ENCODE measurements at regions of chr3 and their contacts with region 1.

Region 1: DNA sequence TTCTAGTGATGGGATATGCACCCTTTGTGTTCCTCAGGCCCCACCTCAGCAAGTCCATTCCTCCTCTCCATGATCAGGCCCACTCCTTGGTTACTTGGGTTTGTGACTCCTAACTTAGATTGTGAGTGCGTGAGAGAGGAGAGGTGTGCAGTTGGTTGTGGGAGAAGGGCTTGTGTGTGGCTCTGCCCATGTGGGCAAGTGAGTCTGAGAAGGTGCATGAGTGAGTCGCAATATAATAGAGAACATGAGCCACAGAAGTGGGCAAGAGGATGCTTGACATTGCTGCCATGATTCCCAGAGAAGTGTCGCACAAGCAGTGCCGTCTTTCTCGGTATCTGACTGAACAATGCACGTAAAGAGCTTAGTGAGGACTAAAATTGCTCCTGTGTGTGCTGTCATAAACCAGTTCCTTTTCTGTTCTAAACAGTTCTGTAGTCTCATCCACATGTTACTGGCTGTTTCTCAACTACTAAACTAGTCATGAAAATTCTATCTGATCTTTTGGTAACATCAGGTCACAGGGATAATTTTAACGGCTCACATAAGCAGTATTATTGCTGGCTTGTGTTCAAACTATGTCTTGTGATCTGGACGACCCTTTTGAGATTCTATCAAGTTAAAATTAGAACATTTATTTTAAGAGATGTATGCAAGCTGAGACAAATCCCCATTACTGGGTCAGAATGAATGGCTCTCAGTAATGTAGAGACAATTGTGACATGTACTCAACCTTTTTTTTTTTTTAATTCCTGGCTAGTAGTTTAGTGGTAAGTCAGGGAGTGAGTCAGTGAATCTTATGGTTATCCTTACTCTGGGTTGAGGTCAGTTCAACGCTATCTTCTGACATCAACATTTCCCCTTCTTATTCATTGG is 25.6 kb downstream of the GYG1 start:
- DNase-seq: no peak
- ATAC-seq: peak; percentile 31 to 65 (median 50)
- H3K4me3 ChIP-seq: no peak overlapping the region
- H3K27ac ChIP-seq: peak overlapping the region in 9 of 10 donors; percentile 23 to 65 (median 55)
- H3K4me1 ChIP-seq: peaks cover 6 to 74% (median 50%) of the 10 kb centered on the region in 9 donors
- H3K27me3 ChIP-seq: no peaks in the 10 kb centered on the region
- CTCF ChIP-seq: no peak

Region 2: DNA sequence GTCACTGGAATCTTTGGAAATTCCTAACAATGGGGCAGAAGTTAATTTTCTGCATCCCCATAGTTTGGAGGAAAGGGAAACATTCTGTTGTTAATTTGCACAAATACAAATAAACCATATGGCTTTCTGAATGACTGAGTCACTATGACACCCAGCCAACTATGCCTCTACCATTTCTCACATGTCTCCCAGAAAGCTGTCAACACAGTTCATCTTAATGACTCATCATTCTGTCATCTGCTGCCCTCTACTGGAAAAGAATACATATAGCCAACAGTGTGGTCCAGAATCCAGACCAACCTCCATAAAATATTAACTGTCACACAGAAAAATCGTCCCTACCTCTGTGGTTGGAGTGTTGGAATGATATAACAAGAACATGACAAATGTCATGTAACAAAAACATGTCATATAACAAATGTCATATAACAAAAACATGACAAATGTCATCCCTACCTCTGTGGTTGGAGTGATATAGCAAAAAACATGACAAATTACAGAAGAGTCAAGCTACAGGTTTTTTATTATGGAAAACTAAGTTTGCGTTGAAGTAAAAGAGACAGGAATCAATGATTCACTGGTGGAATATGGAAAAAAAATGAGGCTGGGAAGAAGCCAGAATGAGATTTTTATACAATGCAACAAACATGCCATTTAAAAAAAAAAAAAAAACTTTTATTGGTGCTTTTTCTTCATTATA is 73.2 kb before region 1 on chr3:
- intact Hi-C with region 1: no loop called
- DNase-seq: peak in 1 of 2 donors; percentile 29
- ATAC-seq: peak; percentile 74 to 93 (median 82)
- H3K4me3 ChIP-seq: no peak overlapping the region
- H3K27ac ChIP-seq: no peak overlapping the region
- H3K4me1 ChIP-seq: peaks cover 0 to 3% (median 0%) of the 10 kb centered on the region in 9 donors
- H3K27me3 ChIP-seq: no peaks in the 10 kb centered on the region
- CTCF ChIP-seq: peak; percentile 37 to 77 (median 72)

Region 3: DNA sequence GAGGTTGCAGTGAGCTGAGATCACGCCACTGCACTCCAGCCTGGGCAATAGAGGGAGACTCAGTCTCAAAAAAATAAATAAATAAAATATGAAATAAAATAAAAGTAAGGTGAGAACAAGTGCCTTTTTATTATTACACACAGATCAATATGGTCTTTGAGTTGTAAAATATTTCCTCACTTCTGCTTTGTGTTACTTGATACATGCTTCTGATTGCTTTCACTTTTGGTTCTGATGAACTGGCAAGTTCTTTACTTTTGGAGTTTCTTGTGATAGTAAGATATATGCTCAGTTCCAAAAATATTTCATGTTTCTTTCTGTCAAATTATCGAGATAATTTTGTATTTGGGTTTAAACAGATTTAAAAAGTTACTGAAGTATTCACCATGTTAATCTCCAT is 42.2 kb before region 1 on chr3:
- intact Hi-C with region 1: loop called in 1 of 10 experiments (anchors 5 kb)
- DNase-seq: no peak
- ATAC-seq: no peak
- H3K4me3 ChIP-seq: peak overlapping the region in 6 of 10 donors; percentile 1 to 25 (median 18)
- H3K27ac ChIP-seq: peak overlapping the region; percentile 38 to 84 (median 74)
- H3K4me1 ChIP-seq: peaks cover 0 to 25% (median 15%) of the 10 kb centered on the region in 9 donors
- H3K27me3 ChIP-seq: no peaks in the 10 kb centered on the region
- CTCF ChIP-seq: no peak

Region 4: DNA sequence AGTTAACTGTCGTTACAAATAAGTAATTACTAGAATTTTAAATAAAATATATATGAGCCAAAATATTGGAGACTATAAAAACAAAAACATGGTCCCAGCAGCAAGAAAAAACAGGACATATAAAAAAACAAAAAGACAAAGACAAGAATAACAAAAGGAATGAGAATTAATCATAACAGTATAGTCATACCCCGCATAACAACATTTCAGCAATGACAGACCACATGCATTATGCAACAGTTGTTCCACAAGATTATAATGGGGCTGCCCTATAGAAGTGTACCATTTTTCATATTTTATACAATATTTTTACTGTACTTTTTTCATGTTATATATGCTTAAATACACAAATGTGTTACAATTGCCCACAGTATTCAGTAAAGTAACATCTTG is 63.8 kb after region 1 on chr3:
- intact Hi-C with region 1: loop called in 1 of 10 experiments (anchors 5 kb)
- DNase-seq: no peak
- ATAC-seq: no peak
- H3K4me3 ChIP-seq: no peak overlapping the region
- H3K27ac ChIP-seq: no peak overlapping the region
- H3K4me1 ChIP-seq: peaks cover 0 to 13% (median 10%) of the 10 kb centered on the region in 9 donors
- H3K27me3 ChIP-seq: no peaks in the 10 kb centered on the region
- CTCF ChIP-seq: no peak

Region 5: GRCh38 chr3:149152420-149152819 is 135.5 kb after region 1 on chr3:
- intact Hi-C with region 1: no loop called
- DNase-seq: no peak
- ATAC-seq: peak in 1 of 8 donors; percentile 11
- H3K4me3 ChIP-seq: no peak overlapping the region
- H3K27ac ChIP-seq: peak overlapping the region in 5 of 10 donors; percentile 0 to 69 (median 24)
- H3K4me1 ChIP-seq: peaks cover 0 to 23% (median 0%) of the 10 kb centered on the region in 9 donors
- H3K27me3 ChIP-seq: no peaks in the 10 kb centered on the region
- CTCF ChIP-seq: no peak